A549 (cell line): ENCODE measurements at regions of chr4 and their contacts with region 1.

Region 1: DNA sequence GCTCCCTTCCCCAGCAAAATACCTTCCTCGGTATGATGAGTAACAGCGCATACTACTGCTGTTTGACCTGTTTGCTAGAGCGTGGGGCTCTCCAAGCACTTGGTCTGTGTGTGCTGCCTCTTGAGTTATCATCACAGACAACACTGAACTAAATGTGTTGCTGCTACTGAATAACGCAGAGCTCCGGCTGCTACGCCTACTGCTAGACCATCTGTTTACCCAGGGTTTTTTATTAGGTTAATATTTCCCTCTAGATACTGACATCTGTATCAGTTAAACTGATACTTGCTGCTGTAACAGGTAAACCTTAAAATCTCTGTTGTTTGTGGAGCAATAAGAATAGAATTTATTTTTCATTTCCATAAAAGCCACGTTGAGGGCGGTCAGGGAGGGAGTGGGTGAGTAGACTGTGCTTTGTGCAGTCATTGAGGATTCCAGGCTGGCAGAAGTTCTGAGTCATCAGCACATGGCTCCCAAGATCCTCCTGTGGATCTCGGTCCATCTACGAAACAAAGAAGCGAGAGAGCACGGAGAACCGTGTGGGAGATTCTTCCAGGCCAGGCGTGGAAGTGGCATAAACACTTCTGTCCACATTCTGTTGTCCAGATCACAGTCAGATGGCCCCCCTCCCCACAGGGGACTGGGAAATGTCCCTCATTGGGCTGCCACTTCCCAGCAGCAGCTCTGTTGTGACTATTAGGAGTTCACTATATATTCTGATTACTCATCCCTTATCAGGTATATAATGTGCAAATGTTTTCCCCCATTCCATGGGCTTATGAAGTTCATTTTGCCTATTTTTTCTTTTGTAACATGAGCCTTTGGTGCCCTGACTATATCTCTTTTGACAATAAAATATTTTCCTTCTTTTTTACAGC is 14.1 kb downstream of the GRK4 start:
- DNase-seq: no peak
- ATAC-seq: peak; percentile 45 to 61; a peak in 2 of 6 replicates
- H3K4me3 ChIP-seq: no peak overlapping the region
- H3K27ac ChIP-seq: no peak overlapping the region
- H3K4me1 ChIP-seq: peaks cover 8% of the 10 kb centered on the region; the same call in 2 of the 3 replicates
- CTCF ChIP-seq: no peak
- EP300 ChIP-seq: no peak
- POLR2A ChIP-seq: no peak
- RAD21 ChIP-seq: no peak

Region 2: GRCh38 chr4:3021627-3022026 is 44.2 kb after region 1 on chr4:
- CTCF ChIA-PET with region 1: interaction called, 10 read pairs
- POLR2A ChIA-PET with region 1: no interaction called
- DNase-seq: no peak
- ATAC-seq: no peak
- H3K4me3 ChIP-seq: no peak overlapping the region
- H3K27ac ChIP-seq: no peak overlapping the region
- H3K4me1 ChIP-seq: no peaks in the 10 kb centered on the region
- CTCF ChIP-seq: no peak
- EP300 ChIP-seq: no peak
- POLR2A ChIP-seq: no peak
- RAD21 ChIP-seq: no peak

Region 3: GRCh38 chr4:3037957-3038461 is 60.6 kb after region 1 on chr4:
- CTCF ChIA-PET with region 1: interaction called, 11 read pairs
- POLR2A ChIA-PET with region 1: no interaction called
- DNase-seq: no peak
- ATAC-seq: no peak
- H3K4me3 ChIP-seq: no peak overlapping the region
- H3K27ac ChIP-seq: no peak overlapping the region
- H3K4me1 ChIP-seq: no peaks in the 10 kb centered on the region
- CTCF ChIP-seq: no peak
- EP300 ChIP-seq: no peak
- POLR2A ChIP-seq: no peak
- RAD21 ChIP-seq: no peak